ENCODE measurements at regions of chr13 and their contacts with region 1.

Region 1: DNA sequence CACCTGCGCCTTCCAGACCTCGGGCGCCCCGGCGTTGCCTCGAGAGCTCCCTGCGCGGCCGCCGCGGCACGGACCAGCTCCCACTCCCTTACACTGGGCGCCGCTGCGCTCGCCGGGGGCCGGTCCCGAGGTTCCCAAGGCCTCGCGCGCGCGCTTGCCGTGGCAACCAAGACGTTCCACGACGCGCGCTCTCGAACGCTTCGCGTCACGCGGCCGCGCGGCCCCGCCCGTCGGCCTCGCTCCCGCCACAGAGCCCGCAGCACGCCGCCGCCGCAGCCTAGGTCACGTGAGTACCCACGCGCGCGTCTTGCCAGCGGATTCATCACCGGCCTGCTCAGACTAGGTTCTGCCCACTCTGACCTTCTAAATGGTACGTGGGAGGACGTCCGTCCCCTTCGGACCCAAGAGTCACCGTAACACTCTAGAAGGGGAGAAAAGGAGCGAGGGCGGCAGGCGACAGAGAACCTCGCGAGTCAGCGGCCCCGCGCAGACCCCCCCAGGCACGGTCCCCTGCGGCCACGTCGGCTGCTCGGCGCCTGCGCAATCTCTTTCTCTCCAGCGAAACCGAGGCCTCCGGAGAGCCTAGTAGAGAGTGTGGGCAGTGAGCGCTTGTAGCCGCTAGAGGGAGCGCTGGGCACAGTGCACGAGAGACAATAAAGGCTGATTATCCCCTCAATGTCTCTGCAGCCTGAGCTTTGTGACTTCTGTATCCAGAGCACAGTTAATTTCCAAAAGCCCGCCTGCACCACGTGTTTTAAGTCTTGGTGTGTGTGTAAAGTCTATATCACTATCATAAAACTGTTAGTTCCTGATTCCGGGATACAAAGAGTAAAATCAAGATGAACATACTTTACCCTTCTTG is at the start of gene SPART:
- DNase-seq: peak; percentile 97
- H3K4me3 ChIP-seq: peak within 1 kb of the TSS; percentile 67
- H3K27ac ChIP-seq: peak within 1 kb of the TSS; percentile 98
- H3K4me1 ChIP-seq: peaks cover 26% of the 10 kb centered on the region
- H3K27me3 ChIP-seq: no peaks in the 10 kb centered on the region
- CTCF ChIP-seq: peak; percentile 99
- total RNA-seq, gene SPART: 169 and 182 TPM in 2 replicates

Region 2: GRCh38 chr13:36275190-36276002 is 71.1 kb before region 1 on chr13:
- CTCF ChIA-PET with region 1: no interaction called
- POLR2A ChIA-PET with region 1: interaction called, 12 read pairs
- intact Hi-C with region 1: no loop called
- DNase-seq: peak; percentile 79
- H3K4me3 ChIP-seq: no peak overlapping the region
- H3K27ac ChIP-seq: no peak overlapping the region
- H3K4me1 ChIP-seq: no peaks in the 10 kb centered on the region
- H3K27me3 ChIP-seq: no peaks in the 10 kb centered on the region
- CTCF ChIP-seq: peak; percentile 76

Region 3: DNA sequence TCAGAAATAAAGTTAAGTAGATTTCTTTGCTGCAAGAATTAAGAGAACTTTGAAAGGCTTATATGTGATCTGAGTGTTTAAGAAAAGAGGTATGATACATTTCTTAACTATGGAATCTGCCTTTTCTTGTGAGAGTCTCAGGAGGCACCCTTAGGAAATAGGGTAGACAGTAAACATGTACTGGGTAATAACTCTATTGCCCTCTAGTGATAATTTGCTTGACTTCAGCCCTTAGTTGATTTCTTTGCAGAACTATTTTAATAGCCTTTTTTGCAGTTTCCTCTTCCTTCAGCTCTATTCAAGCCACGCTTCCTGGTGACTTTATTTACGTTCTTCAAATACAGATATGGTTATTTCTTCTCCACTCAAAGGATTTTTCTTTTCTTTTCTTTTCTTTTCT is 48.8 kb after region 1 on chr13:
- CTCF ChIA-PET with region 1: interaction called, 8 read pairs
- POLR2A ChIA-PET with region 1: interaction called, 4 read pairs
- intact Hi-C with region 1: loop called (anchors 2 kb)
- DNase-seq: peak; percentile 71
- H3K4me3 ChIP-seq: no peak overlapping the region
- H3K27ac ChIP-seq: no peak overlapping the region
- H3K4me1 ChIP-seq: no peaks in the 10 kb centered on the region
- H3K27me3 ChIP-seq: no peaks in the 10 kb centered on the region
- CTCF ChIP-seq: peak; percentile 71

Region 4: DNA sequence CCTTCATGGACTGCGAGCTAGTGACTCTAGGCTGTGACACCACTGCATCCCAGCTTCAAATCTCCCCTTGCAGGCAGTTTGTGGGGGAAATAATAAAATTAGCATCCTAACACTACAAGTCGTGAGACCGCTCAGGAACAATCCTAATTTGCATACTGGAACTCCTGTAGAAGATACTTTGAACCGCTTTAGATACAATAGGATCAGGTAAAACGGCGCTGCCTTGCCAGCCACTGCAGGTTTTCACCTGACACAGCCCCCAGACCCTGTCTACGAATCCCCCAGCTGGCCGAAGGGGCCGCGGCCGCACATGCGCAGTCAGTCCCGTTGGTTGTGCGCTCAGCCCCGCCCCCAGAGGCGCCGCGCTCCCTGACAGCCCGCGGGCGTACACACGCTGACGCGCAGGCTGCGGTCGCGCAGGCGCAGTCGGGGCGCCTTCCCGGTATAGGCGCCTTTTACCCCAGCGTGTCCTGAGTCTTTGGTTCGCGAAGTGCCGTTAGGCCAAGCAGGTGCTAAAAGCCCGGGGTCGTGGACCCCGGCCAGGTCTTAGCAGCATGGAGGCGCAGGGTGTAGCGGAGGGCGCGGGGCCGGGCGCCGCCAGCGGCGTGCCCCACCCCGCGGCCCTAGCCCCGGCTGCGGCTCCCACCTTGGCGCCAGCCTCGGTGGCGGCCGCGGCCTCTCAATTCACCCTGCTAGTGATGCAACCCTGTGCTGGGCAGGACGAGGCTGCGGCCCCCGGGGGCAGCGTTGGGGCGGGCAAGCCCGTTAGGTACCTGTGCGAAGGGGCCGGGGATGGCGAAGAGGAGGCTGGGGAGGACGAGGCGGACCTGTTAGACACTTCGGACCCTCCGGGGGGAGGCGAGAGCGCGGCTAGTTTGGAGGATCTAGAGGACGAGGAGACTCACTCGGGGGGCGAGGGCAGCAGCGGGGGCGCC is 472.6 kb after region 1 on chr13 and contains the start of gene RFXAP:
- CTCF ChIA-PET with region 1: no interaction called
- POLR2A ChIA-PET with region 1: interaction called, 16 read pairs
- intact Hi-C with region 1: no loop called
- DNase-seq: peak; percentile 94
- H3K4me3 ChIP-seq: peak within 1 kb of the TSS; percentile 79
- H3K27ac ChIP-seq: peak within 1 kb of the TSS; percentile 89
- H3K4me1 ChIP-seq: peaks cover 31% of the 10 kb centered on the region
- H3K27me3 ChIP-seq: no peaks in the 10 kb centered on the region
- CTCF ChIP-seq: no peak
- total RNA-seq, gene RFXAP: 25.9 and 29.2 TPM in 2 replicates

Region 5: DNA sequence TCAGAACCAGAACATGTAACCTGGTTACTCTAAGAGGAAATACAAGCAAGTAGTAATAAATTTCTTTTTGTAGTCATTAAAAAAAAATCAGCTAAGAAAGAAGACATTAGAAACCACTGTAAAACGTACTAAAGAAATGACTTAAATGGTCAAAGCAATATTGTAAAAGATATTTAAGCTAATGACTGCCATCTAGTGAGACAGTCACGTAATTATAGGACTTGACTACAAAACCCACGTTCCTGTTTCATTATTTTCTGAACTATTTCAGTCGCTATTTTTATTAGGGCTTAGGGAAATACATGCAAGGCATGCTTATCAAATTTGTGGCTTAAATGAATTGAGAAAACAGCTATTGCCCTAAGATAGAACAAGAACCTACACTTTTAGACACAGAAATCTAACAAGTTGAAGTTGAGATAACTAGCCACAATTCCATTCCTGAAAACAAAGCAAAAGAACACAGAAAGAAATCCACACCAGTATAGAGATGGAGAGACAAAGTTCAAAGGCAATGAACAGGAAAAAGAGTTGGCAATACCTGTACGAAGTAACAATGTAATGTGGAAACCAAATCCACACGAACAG is 634.8 kb after region 1 on chr13:
- CTCF ChIA-PET with region 1: interaction called, 3 read pairs
- POLR2A ChIA-PET with region 1: no interaction called
- intact Hi-C with region 1: loop called (anchors 10 kb)
- DNase-seq: peak; percentile 81
- H3K4me3 ChIP-seq: no peak overlapping the region
- H3K27ac ChIP-seq: peak overlapping the region; percentile 69
- H3K4me1 ChIP-seq: peaks cover 17% of the 10 kb centered on the region
- H3K27me3 ChIP-seq: no peaks in the 10 kb centered on the region
- CTCF ChIP-seq: peak; percentile 69